OCI-LY7 (cell line): ENCODE measurements at regions of chr6 and their contacts with region 1.

Region 1: GRCh38 chr6:108526739-108527174 is 34.0 kb upstream of the FOXO3 start:
- DNase-seq: peak; percentile 54
- H3K4me3 ChIP-seq: no peak overlapping the region
- H3K27ac ChIP-seq: no peak overlapping the region
- H3K4me1 ChIP-seq: no peaks in the 10 kb centered on the region
- CTCF ChIP-seq: peak; percentile 90

Region 2: GRCh38 chr6:107466062-107466461 is 1060.7 kb before region 1 on chr6:
- CTCF ChIA-PET with region 1: no interaction called
- POLR2A ChIA-PET with region 1: no interaction called
- intact Hi-C with region 1: no loop called
- DNase-seq: peak; percentile 52
- H3K4me3 ChIP-seq: no peak overlapping the region
- H3K27ac ChIP-seq: peak overlapping the region; percentile 29
- H3K4me1 ChIP-seq: peaks cover 17% of the 10 kb centered on the region
- CTCF ChIP-seq: no peak

Region 3: DNA sequence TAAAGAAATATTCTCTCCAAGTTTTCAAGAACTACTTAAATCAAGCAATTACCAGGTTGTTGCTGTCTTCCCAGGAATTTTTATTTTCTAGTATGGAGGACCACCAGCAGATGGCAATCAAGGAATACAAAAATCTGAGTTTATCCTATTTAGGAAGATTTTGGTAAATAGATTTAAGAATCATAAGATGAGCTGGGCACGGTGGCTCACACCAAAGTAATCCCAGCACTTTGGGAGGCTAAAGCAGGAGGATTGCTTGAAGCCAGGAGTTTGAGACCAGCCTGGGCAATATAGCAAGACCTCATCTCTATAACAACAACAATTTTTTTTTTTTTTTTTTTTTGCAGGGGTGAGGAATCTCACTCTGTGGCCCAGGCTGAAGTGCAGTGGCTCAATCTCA is 549.5 kb before region 1 on chr6:
- CTCF ChIA-PET with region 1: no interaction called
- POLR2A ChIA-PET with region 1: no interaction called
- intact Hi-C with region 1: loop called (anchors 5 kb)
- DNase-seq: peak; percentile 28
- H3K4me3 ChIP-seq: no peak overlapping the region
- H3K27ac ChIP-seq: no peak overlapping the region
- H3K4me1 ChIP-seq: no peaks in the 10 kb centered on the region
- CTCF ChIP-seq: peak; percentile 72

Region 4: GRCh38 chr6:108113557-108114519 is 412.9 kb before region 1 on chr6:
- CTCF ChIA-PET with region 1: no interaction called
- POLR2A ChIA-PET with region 1: interaction called, 3 read pairs
- intact Hi-C with region 1: loop called (anchors 1 kb)
- DNase-seq: peak; percentile 45
- H3K4me3 ChIP-seq: no peak overlapping the region
- H3K27ac ChIP-seq: no peak overlapping the region
- H3K4me1 ChIP-seq: peaks cover 5% of the 10 kb centered on the region
- CTCF ChIP-seq: peak; percentile 80

Region 5: GRCh38 chr6:108193120-108193519 is 333.6 kb before region 1 on chr6:
- CTCF ChIA-PET with region 1: no interaction called
- POLR2A ChIA-PET with region 1: no interaction called
- intact Hi-C with region 1: no loop called
- DNase-seq: no peak
- H3K4me3 ChIP-seq: no peak overlapping the region
- H3K27ac ChIP-seq: no peak overlapping the region
- H3K4me1 ChIP-seq: no peaks in the 10 kb centered on the region
- CTCF ChIP-seq: no peak